CD4-positive, alpha-beta T cell (primary cell): ENCODE measurements at regions of chr2 and their contacts with region 1.

Region 1: DNA sequence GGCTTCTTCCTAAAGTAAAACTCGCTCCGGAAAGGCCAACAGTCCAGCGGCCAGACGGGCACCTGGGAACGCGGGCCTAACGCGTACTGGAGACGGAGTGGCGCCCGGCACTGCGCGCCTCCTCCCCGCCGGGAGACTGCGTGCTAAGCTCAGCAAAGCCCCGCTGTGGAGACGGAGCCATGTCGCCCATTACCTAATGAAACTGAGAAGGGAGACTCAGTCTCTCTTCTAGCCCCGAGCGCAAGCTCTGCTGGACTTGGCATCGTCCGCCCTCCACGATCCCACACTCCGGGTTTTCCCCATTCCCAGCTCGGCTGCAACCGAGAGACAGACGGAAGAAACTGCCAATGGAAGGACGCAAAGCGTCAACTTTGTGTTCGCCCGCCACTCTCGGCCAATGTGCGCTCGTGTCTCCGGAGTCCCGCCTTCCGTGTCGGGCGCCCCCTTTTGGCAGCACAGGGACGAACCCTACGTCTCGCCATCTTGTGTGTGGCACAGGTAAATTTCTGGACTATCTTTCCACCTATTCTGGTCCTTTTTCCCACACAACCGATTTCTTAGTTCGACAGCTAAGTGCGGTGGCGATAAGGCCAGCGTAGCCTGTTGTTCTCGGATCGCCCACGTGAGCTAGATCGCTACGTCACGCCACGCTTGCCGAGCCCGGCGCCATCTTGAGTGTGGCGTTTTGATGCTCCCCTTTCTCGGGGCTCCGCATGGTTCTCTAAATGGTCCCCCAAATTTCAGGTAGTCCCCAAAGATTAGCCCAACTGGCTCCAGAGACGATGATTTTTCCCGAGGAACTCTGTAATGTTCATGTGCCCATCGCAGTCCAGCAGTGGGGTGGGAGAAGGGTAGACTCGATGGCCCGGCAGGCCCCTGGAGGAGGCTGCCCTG is 1.3 kb upstream of the PTMA start:
- DNase-seq: peak; percentile 95 to 99 (median 98)
- ATAC-seq: peak; percentile 53
- H3K4me3 ChIP-seq: peak overlapping the region; percentile 82
- H3K4me3 Mint-ChIP-seq: peak overlapping the region; percentile 98
- H3K27ac ChIP-seq: peak overlapping the region; percentile 98 to 100
- H3K27ac Mint-ChIP-seq: peak overlapping the region; percentile 100
- H3K4me1 ChIP-seq: peaks cover 40% of the 10 kb centered on the region
- H3K4me1 Mint-ChIP-seq: peaks cover 41% of the 10 kb centered on the region
- H3K27me3 ChIP-seq: no peaks in the 10 kb centered on the region
- H3K27me3 Mint-ChIP-seq: peaks cover 9% of the 10 kb centered on the region
- CTCF ChIP-seq: peak; percentile 96

Region 2: GRCh38 chr2:231514103-231514950 is 192.7 kb before region 1 on chr2:
- CTCF ChIA-PET with region 1: interaction called, 5 read pairs
- POLR2A ChIA-PET with region 1: interaction called, 15 read pairs
- intact Hi-C with region 1: loop called in 1 of 2 experiments (anchors 5 kb)
- DNase-seq: peak; percentile 96 to 99 (median 98)
- ATAC-seq: peak; percentile 96
- H3K4me3 ChIP-seq: peak overlapping the region; percentile 78
- H3K4me3 Mint-ChIP-seq: peak overlapping the region; percentile 91
- H3K27ac ChIP-seq: peak overlapping the region; percentile 87 to 95
- H3K27ac Mint-ChIP-seq: peak overlapping the region; percentile 94
- H3K4me1 ChIP-seq: peaks cover 12% of the 10 kb centered on the region
- H3K4me1 Mint-ChIP-seq: peaks cover 24% of the 10 kb centered on the region
- H3K27me3 ChIP-seq: no peaks in the 10 kb centered on the region
- H3K27me3 Mint-ChIP-seq: no peaks in the 10 kb centered on the region
- CTCF ChIP-seq: no peak

Region 3: DNA sequence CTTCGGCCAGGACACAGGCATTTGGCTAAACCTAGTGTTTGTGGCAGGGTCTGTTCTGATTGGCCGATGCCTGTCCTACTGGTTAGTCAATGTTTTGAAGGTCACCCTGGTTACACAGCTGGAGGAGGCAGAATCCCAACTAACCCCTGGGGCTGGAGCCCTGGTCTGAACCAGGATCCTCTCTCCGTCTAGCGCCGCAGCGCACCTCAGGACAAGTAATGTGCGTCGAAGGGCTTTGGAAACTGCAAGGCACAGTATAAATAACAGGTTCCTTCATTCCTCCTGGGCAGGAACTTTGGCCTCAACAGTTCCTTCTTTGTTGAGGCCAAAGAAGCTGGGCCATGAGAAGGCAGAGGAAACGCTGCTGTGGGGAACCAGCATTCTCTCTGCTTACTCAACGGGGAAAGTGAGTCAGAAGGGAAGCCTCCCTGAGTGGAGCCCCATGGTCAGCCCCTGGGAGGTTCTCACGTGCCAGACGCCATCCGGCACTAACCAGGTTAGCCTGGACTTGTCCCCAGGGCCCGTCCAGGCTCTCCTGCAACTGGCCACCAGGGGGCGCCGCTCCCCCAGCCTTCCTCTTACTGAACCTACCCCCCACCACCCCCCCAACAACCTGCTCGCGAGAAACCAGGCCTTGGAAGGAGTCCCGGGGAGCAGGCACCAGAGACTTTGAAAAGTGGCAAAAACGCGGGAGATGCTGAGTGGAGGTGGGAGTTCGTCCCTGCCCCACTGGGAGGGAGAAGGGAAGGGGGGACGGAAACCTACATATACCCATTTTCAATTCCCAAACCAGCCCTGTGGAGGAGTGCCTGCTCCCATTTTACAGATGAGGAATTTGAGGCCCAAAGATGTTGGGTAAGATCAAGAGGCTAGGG is 94.6 kb before region 1 on chr2:
- CTCF ChIA-PET with region 1: interaction called, 53 read pairs
- POLR2A ChIA-PET with region 1: interaction called, 87 read pairs
- intact Hi-C with region 1: no loop called
- DNase-seq: peak; percentile 79 to 93 (median 86)
- ATAC-seq: peak; percentile 78
- H3K4me3 ChIP-seq: peak overlapping the region; percentile 59
- H3K4me3 Mint-ChIP-seq: peak overlapping the region; percentile 90
- H3K27ac ChIP-seq: no peak overlapping the region
- H3K27ac Mint-ChIP-seq: peak overlapping the region; percentile 74
- H3K4me1 ChIP-seq: peaks cover 34% of the 10 kb centered on the region
- H3K4me1 Mint-ChIP-seq: peaks cover 47% of the 10 kb centered on the region
- H3K27me3 ChIP-seq: no peaks in the 10 kb centered on the region
- H3K27me3 Mint-ChIP-seq: no peaks in the 10 kb centered on the region
- CTCF ChIP-seq: peak; percentile 89

Region 4: DNA sequence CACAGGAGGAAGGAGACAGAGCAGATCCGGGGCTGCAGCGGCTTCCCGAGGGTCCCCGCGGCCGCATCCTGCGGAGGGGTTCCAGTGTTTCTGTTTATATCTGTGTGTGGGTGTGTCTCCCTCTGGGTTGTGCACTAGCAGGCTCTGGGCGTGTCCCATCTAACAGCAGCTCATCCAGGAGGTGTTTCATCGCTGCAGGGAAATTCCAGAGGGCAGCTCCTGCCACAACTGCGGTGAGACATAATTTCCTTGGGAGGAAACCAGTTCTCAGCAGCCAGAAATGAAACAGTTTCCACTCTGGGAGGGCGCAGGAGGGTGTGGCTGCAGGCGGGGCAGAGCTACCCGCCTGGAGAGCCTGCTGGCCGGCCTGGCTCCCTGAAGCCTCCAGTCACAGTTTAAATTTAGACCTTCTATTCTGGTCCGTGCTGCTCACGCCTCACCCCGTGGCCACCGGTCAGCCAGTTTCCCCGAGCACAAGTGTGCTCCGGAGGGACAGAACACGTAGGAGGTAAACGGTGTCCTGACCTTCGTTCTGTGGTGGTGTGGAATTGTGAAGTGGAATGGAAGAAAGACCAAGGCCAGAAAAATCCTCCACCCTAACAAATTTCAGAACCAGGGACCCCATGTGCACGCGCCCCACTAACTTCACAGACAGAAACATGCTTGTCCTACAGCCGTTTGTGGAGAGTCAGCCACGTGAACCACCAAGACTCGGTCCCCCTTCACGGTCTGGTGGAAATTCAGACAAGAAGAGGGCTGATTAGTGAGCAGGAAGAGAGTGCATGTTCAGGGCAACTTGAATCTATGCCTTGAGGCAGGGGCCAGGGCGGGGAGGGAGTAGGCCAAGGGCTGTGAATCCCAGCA is 64.1 kb before region 1 on chr2:
- CTCF ChIA-PET with region 1: no interaction called
- POLR2A ChIA-PET with region 1: interaction called, 11 read pairs
- intact Hi-C with region 1: no loop called
- DNase-seq: peak in 11 of 14 experiments; percentile 9 to 84 (median 35)
- ATAC-seq: peak; percentile 83
- H3K4me3 ChIP-seq: peak overlapping the region; percentile 35
- H3K4me3 Mint-ChIP-seq: peak overlapping the region; percentile 20
- H3K27ac ChIP-seq: no peak overlapping the region
- H3K27ac Mint-ChIP-seq: no peak overlapping the region
- H3K4me1 ChIP-seq: peaks cover 10% of the 10 kb centered on the region
- H3K4me1 Mint-ChIP-seq: peaks cover 14% of the 10 kb centered on the region
- H3K27me3 ChIP-seq: no peaks in the 10 kb centered on the region
- H3K27me3 Mint-ChIP-seq: no peaks in the 10 kb centered on the region
- CTCF ChIP-seq: no peak

Region 5: DNA sequence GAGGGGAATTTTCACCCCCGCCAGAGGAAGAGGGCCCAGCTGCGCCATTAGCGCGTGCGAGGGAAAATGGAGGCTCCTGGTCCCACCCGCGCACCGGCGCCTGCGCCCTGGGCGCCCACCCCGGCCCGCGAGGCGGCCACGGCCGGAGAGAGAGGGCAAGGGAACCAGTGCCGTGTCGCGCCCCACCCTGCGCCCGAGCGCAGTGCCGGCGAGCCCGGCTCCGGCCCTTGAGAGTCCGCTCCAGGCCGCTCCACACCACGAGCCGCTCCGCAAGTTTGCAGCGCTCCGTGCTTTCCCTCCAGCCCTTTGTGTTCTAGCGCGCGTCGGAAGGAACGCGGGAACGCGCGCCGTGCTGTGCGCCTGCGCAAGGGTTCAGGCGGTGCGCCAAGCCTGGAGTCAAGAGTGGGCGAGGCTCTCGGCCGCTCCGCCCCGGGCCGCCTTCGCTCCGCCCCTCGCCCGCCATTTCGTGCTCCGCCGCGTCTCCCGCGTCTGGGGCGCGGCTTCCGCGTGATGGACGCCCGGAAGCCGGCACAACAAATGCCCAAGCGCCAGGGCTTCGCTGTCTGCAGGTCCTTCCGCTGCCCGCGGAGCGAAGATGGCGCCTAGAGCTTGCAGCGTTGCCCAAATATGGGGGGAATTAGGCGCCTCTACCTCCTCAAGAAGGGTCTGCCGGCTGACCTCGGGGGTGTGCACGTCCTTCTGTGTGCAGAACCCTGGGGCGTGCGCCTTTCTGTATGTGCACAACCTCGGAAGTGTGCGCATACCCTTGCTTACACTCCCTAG is 44.8 kb before region 1 on chr2:
- CTCF ChIA-PET with region 1: interaction called, 38 read pairs
- POLR2A ChIA-PET with region 1: interaction called, 245 read pairs
- intact Hi-C with region 1: loop called (anchors 1 kb)
- DNase-seq: peak; percentile 92 to 99 (median 97)
- ATAC-seq: peak; percentile 89
- H3K4me3 ChIP-seq: peak overlapping the region; percentile 57
- H3K4me3 Mint-ChIP-seq: peak overlapping the region; percentile 73
- H3K27ac ChIP-seq: peak overlapping the region; percentile 80 to 96
- H3K27ac Mint-ChIP-seq: peak overlapping the region; percentile 94
- H3K4me1 ChIP-seq: peaks cover 35% of the 10 kb centered on the region
- H3K4me1 Mint-ChIP-seq: peaks cover 17% of the 10 kb centered on the region
- H3K27me3 ChIP-seq: no peaks in the 10 kb centered on the region
- H3K27me3 Mint-ChIP-seq: no peaks in the 10 kb centered on the region
- CTCF ChIP-seq: no peak

Region 6: GRCh38 chr2:231674587-231675338 is 32.2 kb before region 1 on chr2:
- CTCF ChIA-PET with region 1: interaction called, 122 read pairs
- POLR2A ChIA-PET with region 1: interaction called, 62 read pairs
- intact Hi-C with region 1: no loop called
- DNase-seq: peak; percentile 22 to 75 (median 46)
- ATAC-seq: peak; percentile 50
- H3K4me3 ChIP-seq: no peak overlapping the region
- H3K4me3 Mint-ChIP-seq: no peak overlapping the region
- H3K27ac ChIP-seq: no peak overlapping the region
- H3K27ac Mint-ChIP-seq: no peak overlapping the region
- H3K4me1 ChIP-seq: peaks cover 15% of the 10 kb centered on the region
- H3K4me1 Mint-ChIP-seq: peaks cover 5% of the 10 kb centered on the region
- H3K27me3 ChIP-seq: peaks cover 0 to under 1% of the 10 kb centered on the region in 2 experiments
- H3K27me3 Mint-ChIP-seq: peaks cover 4% of the 10 kb centered on the region
- CTCF ChIP-seq: peak; percentile 72

Region 7: GRCh38 chr2:231687133-231687852 is 19.7 kb before region 1 on chr2:
- CTCF ChIA-PET with region 1: interaction called, 10 read pairs
- POLR2A ChIA-PET with region 1: interaction called, 11 read pairs
- intact Hi-C with region 1: no loop called
- DNase-seq: peak; percentile 42 to 81 (median 66)
- ATAC-seq: peak; percentile 90
- H3K4me3 ChIP-seq: no peak overlapping the region
- H3K4me3 Mint-ChIP-seq: no peak overlapping the region
- H3K27ac ChIP-seq: no peak overlapping the region
- H3K27ac Mint-ChIP-seq: no peak overlapping the region
- H3K4me1 ChIP-seq: peaks cover 6% of the 10 kb centered on the region
- H3K4me1 Mint-ChIP-seq: peaks cover 5% of the 10 kb centered on the region
- H3K27me3 ChIP-seq: no peaks in the 10 kb centered on the region
- H3K27me3 Mint-ChIP-seq: peaks cover 8% of the 10 kb centered on the region
- CTCF ChIP-seq: peak; percentile 75

Region 8: GRCh38 chr2:232133078-232133477 is 426.1 kb after region 1 on chr2:
- CTCF ChIA-PET with region 1: no interaction called
- POLR2A ChIA-PET with region 1: no interaction called
- intact Hi-C with region 1: no loop called
- DNase-seq: no peak
- ATAC-seq: no peak
- H3K4me3 ChIP-seq: no peak overlapping the region
- H3K4me3 Mint-ChIP-seq: no peak overlapping the region
- H3K27ac ChIP-seq: no peak overlapping the region
- H3K27ac Mint-ChIP-seq: no peak overlapping the region
- H3K4me1 ChIP-seq: no peaks in the 10 kb centered on the region
- H3K4me1 Mint-ChIP-seq: peaks cover 38% of the 10 kb centered on the region
- H3K27me3 ChIP-seq: no peaks in the 10 kb centered on the region
- H3K27me3 Mint-ChIP-seq: no peaks in the 10 kb centered on the region
- CTCF ChIP-seq: no peak